ENCODE measurements at regions of chr7 and their contacts with region 1.

Region 1: GRCh38 chr7:35906191-35906908 is 105.5 kb downstream of the SEPTIN7 start:
- DNase-seq: peak; percentile 69 to 72
- H3K4me3 ChIP-seq: no peak overlapping the region
- H3K27ac ChIP-seq: no peak overlapping the region
- H3K4me1 ChIP-seq: no peaks in the 10 kb centered on the region
- H3K27me3 ChIP-seq: no peaks in the 10 kb centered on the region
- CTCF ChIP-seq: peak; percentile 97

Region 2: GRCh38 chr7:35185907-35186731 is 720.2 kb before region 1 on chr7:
- CTCF ChIA-PET with region 1: no interaction called
- POLR2A ChIA-PET with region 1: no interaction called
- intact Hi-C with region 1: loop called (anchors 10 kb)
- DNase-seq: peak in 1 of 2 experiments; percentile 25
- H3K4me3 ChIP-seq: no peak overlapping the region; the same call in 1 of the 2 replicates
- H3K27ac ChIP-seq: no peak overlapping the region
- H3K4me1 ChIP-seq: no peaks in the 10 kb centered on the region
- H3K27me3 ChIP-seq: no peaks in the 10 kb centered on the region
- CTCF ChIP-seq: no peak

Region 3: GRCh38 chr7:35424869-35425495 is 481.4 kb before region 1 on chr7:
- CTCF ChIA-PET with region 1: no interaction called
- POLR2A ChIA-PET with region 1: no interaction called
- intact Hi-C with region 1: loop called (anchors 2 kb)
- DNase-seq: peak; percentile 59 to 63
- H3K4me3 ChIP-seq: no peak overlapping the region
- H3K27ac ChIP-seq: no peak overlapping the region
- H3K4me1 ChIP-seq: no peaks in the 10 kb centered on the region
- H3K27me3 ChIP-seq: no peaks in the 10 kb centered on the region
- CTCF ChIP-seq: peak; percentile 94

Region 4: DNA sequence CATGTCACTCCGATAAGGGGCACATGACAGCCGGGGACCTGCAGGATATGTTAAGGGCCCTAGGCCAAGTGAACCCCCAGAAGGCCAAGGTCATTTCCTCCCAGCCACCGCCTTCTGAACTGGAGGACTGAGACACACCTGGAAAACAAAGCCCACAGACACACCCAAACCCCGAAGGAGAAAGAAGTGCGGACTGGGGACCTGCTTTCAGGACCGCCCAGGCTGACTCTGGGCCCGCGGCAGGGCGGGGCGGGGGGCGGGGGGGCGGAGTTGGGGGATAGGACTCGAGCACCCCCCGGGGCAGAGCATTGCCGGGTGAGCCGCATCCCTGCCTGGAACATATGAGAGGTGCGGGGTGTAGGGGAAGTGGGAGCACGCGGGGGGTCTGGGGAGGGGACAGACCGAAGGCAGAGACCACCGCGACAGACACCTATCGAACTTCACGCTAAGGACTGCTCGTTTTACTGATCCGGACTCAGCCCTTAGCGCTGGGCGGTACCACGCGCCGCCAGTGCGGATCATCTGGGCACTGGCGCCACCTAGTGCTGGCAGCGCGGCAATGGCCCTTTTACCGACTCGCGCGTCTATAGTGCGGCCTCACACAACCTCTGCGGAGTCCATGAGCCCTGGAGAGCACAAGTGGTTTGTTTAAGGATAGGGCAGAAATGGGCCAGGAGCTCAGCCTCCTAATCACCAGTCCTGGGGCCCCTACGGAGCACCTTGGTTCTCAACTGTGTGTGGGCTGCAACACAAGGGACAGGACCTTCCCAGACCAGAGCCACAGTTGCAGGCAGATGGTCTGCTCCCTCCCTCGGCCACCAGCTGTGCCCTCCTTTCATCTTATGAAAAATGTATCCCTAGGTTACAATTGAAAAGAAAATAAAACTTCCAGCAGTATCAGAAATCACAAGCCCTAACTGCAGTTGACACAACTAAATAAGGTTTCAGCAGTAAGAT is 369.0 kb before region 1 on chr7:
- CTCF ChIA-PET with region 1: no interaction called
- POLR2A ChIA-PET with region 1: no interaction called
- intact Hi-C with region 1: loop called (anchors 5 kb)
- DNase-seq: peak; percentile 56 to 73
- H3K4me3 ChIP-seq: peak overlapping the region; percentile 55
- H3K27ac ChIP-seq: no peak overlapping the region
- H3K4me1 ChIP-seq: 0 out of 2 replicates have a peak, but pooled peaks cover 9% of the 10 kb centered on the region
- H3K27me3 ChIP-seq: 0 out of 2 replicates have a peak, but pooled peaks cover 18% of the 10 kb centered on the region
- CTCF ChIP-seq: peak; percentile 100

Region 5: DNA sequence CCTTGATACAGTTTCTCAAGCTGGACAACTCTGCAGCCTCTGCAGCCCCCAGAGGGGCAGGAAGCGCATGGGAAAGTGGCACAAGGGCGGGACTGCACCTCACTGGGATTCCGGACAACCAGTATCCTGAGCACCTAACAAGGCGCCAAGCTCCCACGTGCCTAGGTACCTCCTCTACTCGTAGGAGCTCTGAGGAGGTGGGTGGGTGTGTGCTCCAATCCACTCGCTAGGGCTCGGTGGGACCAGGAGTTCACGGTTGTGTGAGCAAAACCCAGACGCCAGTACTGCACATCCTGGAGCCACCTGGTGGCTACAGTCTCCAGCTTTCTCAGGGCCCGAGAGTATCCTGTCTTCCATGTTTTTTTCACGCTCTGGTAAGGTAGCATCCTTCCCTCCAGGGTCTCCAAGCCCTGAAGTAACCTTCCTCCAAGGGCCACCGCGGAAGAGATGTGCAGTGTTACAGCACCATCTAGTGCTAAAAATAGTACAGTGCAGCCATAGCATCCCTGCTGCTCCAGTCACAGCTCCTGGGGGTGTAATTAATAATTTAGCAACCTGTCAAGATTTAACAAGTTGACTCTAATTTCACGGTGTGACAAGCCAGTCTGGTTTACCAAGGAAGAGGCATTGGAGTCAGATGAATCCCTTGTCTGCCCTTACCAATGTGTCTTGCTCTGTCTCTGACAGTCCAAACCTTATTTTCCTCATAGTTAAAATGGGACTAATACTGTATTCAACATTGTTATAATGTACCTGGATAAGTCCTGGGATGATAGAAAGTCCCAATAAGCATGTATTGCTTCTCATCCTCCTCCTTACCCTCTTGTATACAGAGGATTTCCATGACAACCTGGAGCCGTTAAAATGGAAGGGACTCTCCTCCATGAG is 281.8 kb before region 1 on chr7:
- CTCF ChIA-PET with region 1: no interaction called
- POLR2A ChIA-PET with region 1: no interaction called
- intact Hi-C with region 1: loop called (anchors 5 kb)
- DNase-seq: peak in 1 of 2 experiments; percentile 32
- H3K4me3 ChIP-seq: no peak overlapping the region
- H3K27ac ChIP-seq: no peak overlapping the region
- H3K4me1 ChIP-seq: no peaks in the 10 kb centered on the region
- H3K27me3 ChIP-seq: no peaks in the 10 kb centered on the region
- CTCF ChIP-seq: peak; percentile 93

Region 6: DNA sequence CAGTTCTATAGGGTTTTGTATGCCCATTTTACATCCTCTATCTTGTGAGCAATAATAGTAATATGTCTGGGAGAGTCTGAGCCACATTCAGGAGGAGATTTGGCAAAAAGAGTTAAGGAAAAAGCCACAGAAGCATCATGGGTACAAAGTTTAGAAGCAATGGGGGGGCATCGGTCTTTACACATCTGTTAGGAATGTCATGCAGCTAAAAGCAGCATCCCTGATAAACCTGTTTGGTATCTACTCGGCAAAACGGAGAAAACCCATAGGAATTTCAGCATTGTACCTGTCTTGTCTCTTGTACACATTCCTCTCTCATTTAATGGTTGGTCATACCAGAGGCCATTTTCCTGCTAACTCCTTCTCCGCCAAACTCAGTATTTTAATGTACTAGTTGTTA is 198.9 kb before region 1 on chr7:
- CTCF ChIA-PET with region 1: interaction called, 8 read pairs
- POLR2A ChIA-PET with region 1: interaction called, 13 read pairs
- intact Hi-C with region 1: loop called (anchors 1 kb)
- DNase-seq: peak in 1 of 2 experiments; percentile 85
- H3K4me3 ChIP-seq: no peak overlapping the region
- H3K27ac ChIP-seq: no peak overlapping the region
- H3K4me1 ChIP-seq: peaks cover 16% of the 10 kb centered on the region
- H3K27me3 ChIP-seq: no peaks in the 10 kb centered on the region
- CTCF ChIP-seq: no peak

Region 7: DNA sequence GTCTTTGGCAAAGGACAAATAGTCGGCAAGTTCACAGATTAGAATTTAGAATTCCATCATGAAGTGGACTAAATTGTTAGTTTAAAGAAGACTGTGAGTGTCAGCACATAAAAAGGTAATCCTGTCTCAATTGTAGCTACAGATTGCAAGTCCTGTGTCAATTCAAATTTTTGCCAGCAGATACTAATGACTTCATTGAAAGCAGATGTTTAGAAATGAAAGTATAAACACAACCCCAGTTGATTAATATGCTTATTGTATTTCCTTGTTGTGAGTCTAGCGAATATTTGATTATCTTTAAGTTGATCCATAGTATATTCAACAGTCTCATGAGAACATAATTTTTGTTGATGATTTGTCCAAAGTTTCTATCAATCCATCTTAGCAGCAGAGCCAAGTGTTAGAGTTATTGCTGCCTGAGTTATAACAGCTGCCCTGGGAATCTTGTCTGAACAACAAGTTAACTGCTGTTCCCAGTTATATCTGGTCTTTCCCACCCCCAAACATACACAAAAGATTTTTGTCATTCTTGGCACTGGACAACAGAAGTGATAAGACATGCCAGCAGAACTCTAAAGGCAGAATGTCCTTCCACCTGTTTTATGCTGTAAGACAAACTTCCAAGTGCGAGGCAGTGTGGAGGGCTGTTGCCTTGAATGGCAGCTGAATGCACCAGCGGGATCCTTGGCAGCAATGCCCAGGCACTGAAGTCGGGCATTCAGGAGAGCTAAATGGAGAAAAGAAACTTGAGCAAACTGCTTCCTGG is 190.1 kb before region 1 on chr7:
- CTCF ChIA-PET with region 1: interaction called, 5 read pairs
- POLR2A ChIA-PET with region 1: interaction called, 13 read pairs
- intact Hi-C with region 1: no loop called
- DNase-seq: no peak
- H3K4me3 ChIP-seq: no peak overlapping the region
- H3K27ac ChIP-seq: no peak overlapping the region
- H3K4me1 ChIP-seq: no peaks in the 10 kb centered on the region
- H3K27me3 ChIP-seq: no peaks in the 10 kb centered on the region
- CTCF ChIP-seq: no peak

Measured in PC-9 (cell line).